GM23248 (cell line): ENCODE measurements at regions of chr5 and their contacts with region 1.

Region 1: DNA sequence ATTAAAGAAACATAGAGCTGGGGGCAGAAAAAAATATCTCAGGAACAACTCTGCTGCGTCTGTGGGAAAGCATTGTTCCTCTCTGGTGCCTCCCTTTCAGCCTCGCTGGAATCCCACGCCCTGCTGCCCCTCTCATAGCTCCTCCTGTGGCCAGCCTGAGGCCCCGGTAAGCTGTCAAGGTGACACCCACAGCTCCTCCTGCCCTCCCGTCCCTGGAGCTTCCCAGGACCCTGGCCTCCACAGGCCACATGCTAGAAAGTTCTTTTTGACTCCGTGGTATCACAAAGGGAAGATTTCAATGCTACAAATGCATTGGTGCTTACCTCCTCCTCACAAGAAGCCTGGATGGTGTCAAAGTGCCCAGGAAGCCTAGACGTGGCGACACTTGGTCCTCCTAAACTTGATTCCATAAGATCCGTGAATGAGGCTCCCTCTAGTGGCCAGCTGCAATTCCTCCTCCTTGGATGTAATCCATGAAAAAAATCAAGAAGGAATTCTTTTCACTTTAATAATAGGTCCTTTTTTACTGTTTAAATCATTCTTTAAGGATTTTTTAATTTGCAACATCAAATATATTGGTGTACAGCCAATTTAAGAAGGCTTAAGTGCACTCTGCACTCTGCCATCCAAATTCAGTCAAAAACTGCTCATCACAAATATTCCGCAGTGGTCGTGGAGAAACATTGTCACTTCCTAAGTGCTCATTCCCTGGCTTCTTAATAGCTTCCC is 104.9 kb downstream of the CFAP90 start:
- DNase-seq: peak; percentile 71
- H3K4me3 ChIP-seq: no peak overlapping the region
- H3K27ac ChIP-seq: no peak overlapping the region
- H3K4me1 ChIP-seq: no peaks in the 10 kb centered on the region
- H3K27me3 ChIP-seq: no peaks in the 10 kb centered on the region

Region 2: GRCh38 chr5:7251132-7251531 is 494.9 kb before region 1 on chr5:
- in situ Hi-C with region 1: loop called (anchors 10 kb)
- DNase-seq: no peak
- H3K4me3 ChIP-seq: no peak overlapping the region
- H3K27ac ChIP-seq: no peak overlapping the region
- H3K4me1 ChIP-seq: no peaks in the 10 kb centered on the region
- H3K27me3 ChIP-seq: no peaks in the 10 kb centered on the region

Region 3: GRCh38 chr5:8135742-8136141 is 389.7 kb after region 1 on chr5:
- in situ Hi-C with region 1: no loop called
- DNase-seq: no peak
- H3K4me3 ChIP-seq: no peak overlapping the region
- H3K27ac ChIP-seq: no peak overlapping the region
- H3K4me1 ChIP-seq: no peaks in the 10 kb centered on the region
- H3K27me3 ChIP-seq: no peaks in the 10 kb centered on the region